ENCODE measurements at regions of chr22 and their contacts with region 1.

Region 1: GRCh38 chr22:41127451-41127850 is 35.1 kb downstream of the EP300 start:
- DNase-seq: no peak
- ATAC-seq: no peak

Region 2: GRCh38 chr22:40922484-40923303 is 204.8 kb before region 1 on chr22:
- intact Hi-C with region 1: loop called in 1 of 2 experiments (anchors 10 kb)
- DNase-seq: no peak
- ATAC-seq: peak; percentile 85

Region 3: GRCh38 chr22:41226723-41227655 is 99.5 kb after region 1 on chr22:
- intact Hi-C with region 1: no loop called
- DNase-seq: peak in 1 of 2 donors; percentile 15
- ATAC-seq: no peak

Measured in left colon (tissue), 2 donors.